Mammary epithelial cell (primary cell): ENCODE measurements at regions of chr9 and their contacts with region 1.

Region 1: DNA sequence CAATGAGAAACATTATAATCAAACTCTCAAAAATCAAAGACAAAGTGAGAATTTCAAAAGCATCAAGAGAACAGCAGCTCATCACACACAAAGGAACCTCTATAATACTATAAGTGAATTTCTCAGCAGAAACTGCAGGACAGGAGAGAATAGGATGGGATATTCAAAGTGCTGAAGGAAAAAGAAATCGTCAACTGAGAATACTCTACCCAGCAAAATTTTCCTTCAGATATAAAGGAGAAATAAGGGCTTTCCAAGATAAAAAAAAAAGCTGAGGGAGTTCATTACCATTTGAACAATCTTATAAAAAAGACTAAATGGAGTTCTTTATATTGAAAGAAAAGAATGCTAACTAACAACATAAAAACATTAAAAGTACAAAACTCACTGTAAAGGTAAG is 481.1 kb downstream of the TLE4 start:
- DNase-seq: no peak
- H3K4me3 ChIP-seq: no peak overlapping the region
- H3K27ac ChIP-seq: no peak overlapping the region
- H3K4me1 ChIP-seq: no peaks in the 10 kb centered on the region
- H3K27me3 ChIP-seq: no peaks in the 10 kb centered on the region
- CTCF ChIP-seq: no peak

Region 2: DNA sequence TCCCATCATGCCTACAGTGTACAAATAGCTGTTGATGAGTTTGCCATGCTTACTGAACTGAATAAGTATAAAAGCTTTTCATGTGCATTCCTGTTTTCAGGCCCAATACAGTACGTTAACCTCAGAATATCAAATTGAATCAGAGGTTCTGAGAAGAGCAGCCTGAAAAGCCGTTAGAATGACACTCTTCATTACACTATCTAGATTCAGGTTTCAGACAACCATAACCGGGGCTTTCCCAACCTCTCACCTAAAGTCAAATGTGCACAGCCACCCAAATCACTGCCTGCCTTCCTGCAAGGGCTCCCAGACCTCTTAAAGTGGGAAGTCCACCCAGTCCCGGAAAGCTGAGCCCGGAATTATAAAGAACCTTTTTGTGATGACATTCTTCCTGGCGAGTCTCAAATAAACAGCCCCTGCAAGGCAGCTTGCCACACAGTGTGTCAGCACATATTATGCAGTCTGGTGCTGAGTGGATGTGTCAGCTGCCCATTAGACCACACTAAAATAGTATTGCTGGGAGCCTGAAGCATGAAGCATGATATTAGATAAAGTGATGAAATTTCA is 235.3 kb before region 1 on chr9:
- CTCF ChIA-PET with region 1: no interaction called
- dilution Hi-C with region 1: no loop called
- in situ Hi-C with region 1: no loop called
- intact Hi-C with region 1: no loop called
- DNase-seq: no peak
- H3K4me3 ChIP-seq: no peak overlapping the region
- H3K27ac ChIP-seq: no peak overlapping the region
- H3K4me1 ChIP-seq: no peaks in the 10 kb centered on the region
- H3K27me3 ChIP-seq: no peaks in the 10 kb centered on the region
- CTCF ChIP-seq: no peak

Region 3: DNA sequence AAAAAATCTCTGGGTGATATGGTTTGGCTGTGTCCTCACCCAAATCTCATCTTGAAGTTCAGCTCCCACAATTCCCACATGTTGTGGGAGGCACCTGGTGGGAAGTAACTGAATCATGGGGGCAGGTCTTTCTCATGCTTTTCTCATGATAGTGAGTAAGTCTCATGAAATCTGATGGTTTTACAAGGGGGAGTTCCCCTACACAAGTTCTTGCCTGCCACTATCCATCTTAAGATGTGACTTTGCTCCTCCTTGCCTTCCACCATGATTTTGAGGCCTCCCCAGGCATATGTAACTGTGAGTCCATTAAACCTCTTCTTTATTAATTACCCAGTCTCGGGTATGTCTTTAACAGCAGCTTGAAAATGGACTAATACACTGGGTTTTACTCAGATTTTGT is 32.8 kb after region 1 on chr9:
- CTCF ChIA-PET with region 1: no interaction called
- dilution Hi-C with region 1: no loop called
- in situ Hi-C with region 1: no loop called
- intact Hi-C with region 1: no loop called
- DNase-seq: peak; percentile 21
- H3K4me3 ChIP-seq: no peak overlapping the region
- H3K27ac ChIP-seq: no peak overlapping the region
- H3K4me1 ChIP-seq: no peaks in the 10 kb centered on the region
- H3K27me3 ChIP-seq: no peaks in the 10 kb centered on the region
- CTCF ChIP-seq: no peak

Region 4: GRCh38 chr9:80097476-80097875 is 44.6 kb after region 1 on chr9:
- CTCF ChIA-PET with region 1: no interaction called
- dilution Hi-C with region 1: loop called (anchors 5 kb)
- in situ Hi-C with region 1: no loop called
- intact Hi-C with region 1: no loop called
- DNase-seq: no peak
- H3K4me3 ChIP-seq: no peak overlapping the region
- H3K27ac ChIP-seq: no peak overlapping the region
- H3K4me1 ChIP-seq: no peaks in the 10 kb centered on the region
- H3K27me3 ChIP-seq: no peaks in the 10 kb centered on the region
- CTCF ChIP-seq: no peak